Activated CD4-positive, alpha-beta memory T cell treated with anti-CD3 and anti-CD28 coated beads for 36 hours (primary cell): ENCODE measurements at regions of chr15 and their contacts with region 1.

Region 1: DNA sequence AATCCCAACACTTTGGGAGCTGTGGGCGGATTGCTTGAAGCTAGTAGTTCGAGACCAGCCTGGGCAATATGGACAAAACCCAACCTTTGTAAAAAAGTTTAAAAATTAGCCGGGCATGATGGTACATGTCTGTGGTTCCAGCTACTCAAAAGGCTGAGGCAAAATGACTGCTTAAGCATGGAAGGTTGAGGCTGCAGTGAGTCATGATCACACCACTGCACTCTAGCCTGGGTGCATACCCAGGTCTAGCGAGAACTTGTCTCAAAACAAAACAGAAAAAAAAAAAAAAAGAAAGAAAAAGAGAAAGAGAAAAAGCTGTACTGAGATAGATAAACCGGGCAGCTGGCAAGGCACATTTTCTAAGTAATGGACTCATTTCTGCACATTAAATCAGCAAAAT is 10.6 kb downstream of the ARPP19 start:
- DNase-seq: peak; percentile 84
- H3K4me3 Mint-ChIP-seq: peak overlapping the region; percentile 37
- H3K27ac Mint-ChIP-seq: peak overlapping the region; percentile 97
- H3K4me1 Mint-ChIP-seq: peaks cover 72% of the 10 kb centered on the region
- H3K27me3 Mint-ChIP-seq: no peaks in the 10 kb centered on the region

Region 2: GRCh38 chr15:52005748-52006701 is 552.2 kb before region 1 on chr15:
- CTCF ChIA-PET with region 1: no interaction called
- POLR2A ChIA-PET with region 1: interaction called, 5 read pairs
- intact Hi-C with region 1: loop called (anchors 5 kb)
- DNase-seq: peak; percentile 60
- H3K4me3 Mint-ChIP-seq: no peak overlapping the region
- H3K27ac Mint-ChIP-seq: peak overlapping the region; percentile 69
- H3K4me1 Mint-ChIP-seq: peaks cover 63% of the 10 kb centered on the region
- H3K27me3 Mint-ChIP-seq: no peaks in the 10 kb centered on the region

Region 3: DNA sequence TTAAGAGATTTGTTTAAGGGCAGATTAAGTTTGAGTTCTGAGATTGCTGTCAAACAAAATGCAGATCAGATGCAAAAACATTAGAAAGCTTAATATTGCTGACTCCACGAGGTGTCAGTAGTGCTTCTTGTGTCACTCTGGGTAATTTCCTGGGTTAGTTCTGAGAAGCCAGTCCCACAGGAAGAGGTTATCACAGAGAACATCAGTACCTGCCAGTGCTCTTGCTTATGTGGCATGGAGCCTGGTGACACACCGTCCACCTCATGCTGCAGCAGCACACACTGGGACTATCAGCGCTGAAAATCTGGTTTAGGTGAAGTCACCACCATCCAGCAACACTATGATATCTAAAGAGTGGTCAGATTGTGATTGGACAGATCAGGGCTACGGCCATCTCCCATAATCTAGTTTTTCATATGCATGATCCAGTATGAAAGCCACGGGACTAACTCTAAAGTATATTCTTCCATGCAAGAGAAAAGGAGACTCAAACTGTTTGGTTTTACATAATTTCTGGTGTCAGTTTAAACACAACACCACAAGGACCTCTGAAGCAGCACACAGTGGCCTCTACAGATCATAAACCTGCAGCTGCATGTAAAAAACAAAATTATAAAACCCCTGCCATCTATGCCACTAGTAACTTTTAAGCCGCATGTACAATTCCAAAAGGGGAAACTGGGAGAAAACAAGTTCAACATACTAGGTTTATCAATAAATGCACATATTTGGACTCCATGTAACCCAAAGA is 226.5 kb before region 1 on chr15:
- CTCF ChIA-PET with region 1: interaction called, 4 read pairs
- POLR2A ChIA-PET with region 1: interaction called, 3 read pairs
- intact Hi-C with region 1: loop called (anchors 1 kb)
- DNase-seq: peak; percentile 76
- H3K4me3 Mint-ChIP-seq: no peak overlapping the region
- H3K27ac Mint-ChIP-seq: peak overlapping the region; percentile 82
- H3K4me1 Mint-ChIP-seq: peaks cover 18% of the 10 kb centered on the region
- H3K27me3 Mint-ChIP-seq: no peaks in the 10 kb centered on the region

Region 4: DNA sequence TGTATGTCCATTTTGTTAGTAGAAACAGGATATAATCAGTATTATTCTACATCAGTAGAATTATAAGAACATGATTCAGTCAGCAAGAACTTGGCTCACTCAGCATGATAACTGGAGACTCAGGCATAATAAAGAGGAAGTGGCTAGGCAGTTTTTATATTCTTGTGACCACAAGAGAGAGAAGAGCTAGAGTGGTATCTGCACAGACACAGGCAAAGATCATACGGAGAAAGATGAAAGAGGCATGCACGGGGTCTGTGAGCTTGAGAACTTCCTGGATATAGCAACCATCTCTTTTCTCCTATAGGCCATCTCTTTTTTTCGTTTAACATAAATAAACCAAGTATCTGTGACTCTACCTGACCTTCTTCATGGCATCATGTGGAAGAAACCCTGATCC is 76.3 kb before region 1 on chr15:
- CTCF ChIA-PET with region 1: no interaction called
- POLR2A ChIA-PET with region 1: interaction called, 5 read pairs
- intact Hi-C with region 1: loop called (anchors 1 kb)
- DNase-seq: peak; percentile 60
- H3K4me3 Mint-ChIP-seq: no peak overlapping the region
- H3K27ac Mint-ChIP-seq: peak overlapping the region; percentile 53
- H3K4me1 Mint-ChIP-seq: peaks cover 67% of the 10 kb centered on the region
- H3K27me3 Mint-ChIP-seq: no peaks in the 10 kb centered on the region

Region 5: DNA sequence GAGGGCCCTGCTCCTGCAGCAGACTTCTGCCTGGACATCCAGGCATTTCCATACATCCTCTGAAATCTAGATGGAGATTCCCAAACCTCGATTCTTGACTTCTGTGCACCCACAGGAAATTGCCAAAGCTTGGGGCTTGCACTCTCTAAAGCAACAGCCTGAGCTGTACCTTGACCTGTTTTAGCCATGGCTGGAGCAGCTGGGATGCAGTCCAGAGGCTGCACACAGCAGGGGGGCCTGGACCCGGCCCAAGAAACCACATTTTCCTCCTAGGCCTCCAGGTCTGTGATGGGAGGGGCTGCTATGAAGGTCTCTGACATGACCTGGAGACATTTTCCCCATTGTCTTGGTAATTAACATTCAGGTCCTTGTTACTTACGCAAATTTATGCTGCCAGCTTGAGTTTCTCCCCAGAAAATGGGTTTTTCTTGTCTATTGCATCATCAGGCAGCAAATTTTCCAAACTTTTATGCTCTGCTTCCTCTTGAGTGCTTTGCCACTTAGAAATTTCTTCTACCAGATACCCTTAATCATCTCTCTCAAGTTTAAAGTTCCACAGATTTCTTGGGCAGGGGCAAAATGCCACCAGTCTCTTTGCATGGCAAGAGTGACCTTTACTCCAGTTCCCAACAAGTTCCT is 17.7 kb before region 1 on chr15:
- CTCF ChIA-PET with region 1: no interaction called
- POLR2A ChIA-PET with region 1: interaction called, 11 read pairs
- intact Hi-C with region 1: loop called (anchors 1 kb)
- DNase-seq: no peak
- H3K4me3 Mint-ChIP-seq: no peak overlapping the region
- H3K27ac Mint-ChIP-seq: no peak overlapping the region
- H3K4me1 Mint-ChIP-seq: peaks cover 4% of the 10 kb centered on the region
- H3K27me3 Mint-ChIP-seq: no peaks in the 10 kb centered on the region

Region 6: DNA sequence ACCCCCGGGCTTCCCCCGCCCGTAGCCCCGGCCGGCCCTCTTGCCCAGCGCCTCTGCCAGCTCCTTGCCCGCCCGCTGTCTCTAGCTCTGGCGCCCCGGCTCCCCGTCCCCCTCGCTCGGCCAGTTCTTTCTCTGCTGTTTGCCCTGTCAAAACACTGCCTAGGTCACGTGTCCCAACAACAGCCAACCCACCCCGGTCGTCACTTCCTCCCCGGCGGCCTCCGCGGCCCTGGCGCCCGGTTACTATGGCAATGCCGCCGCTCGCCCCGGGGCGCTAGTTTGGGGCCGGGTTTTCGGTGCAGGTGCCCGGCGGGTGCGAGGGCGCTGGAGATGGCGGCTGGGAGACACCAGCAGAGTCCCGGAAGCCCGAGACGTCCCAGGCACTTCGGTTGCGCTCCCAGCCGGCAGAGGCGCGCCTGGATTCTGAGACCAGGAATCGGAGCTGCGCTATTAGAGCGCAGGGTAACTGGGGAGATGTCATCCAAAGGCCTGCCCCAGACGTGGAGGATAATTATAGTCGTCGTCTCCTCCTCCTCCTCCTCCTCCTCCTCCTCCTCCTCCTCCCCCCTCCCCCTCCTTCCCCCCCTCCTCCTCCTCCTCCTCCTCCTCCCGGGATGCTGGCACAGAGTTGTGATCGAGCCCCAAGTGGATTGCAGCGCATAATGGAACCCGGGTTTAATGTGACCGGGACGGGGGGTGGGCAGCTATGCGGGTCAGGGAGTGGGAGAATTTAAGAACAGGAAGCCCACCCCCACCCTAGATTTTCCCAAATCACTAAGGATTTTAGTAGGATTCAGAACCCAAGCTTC is 121.2 kb after region 1 on chr15 and contains the start of gene ATOSA:
- CTCF ChIA-PET with region 1: interaction called, 4 read pairs
- POLR2A ChIA-PET with region 1: interaction called, 5 read pairs
- intact Hi-C with region 1: loop called (anchors 1 kb)
- DNase-seq: peak; percentile 95
- H3K4me3 Mint-ChIP-seq: peak within 1 kb of the TSS; percentile 100
- H3K27ac Mint-ChIP-seq: peak within 1 kb of the TSS; percentile 97
- H3K4me1 Mint-ChIP-seq: peaks cover 47% of the 10 kb centered on the region
- H3K27me3 Mint-ChIP-seq: no peaks in the 10 kb centered on the region
- total RNA-seq, gene ATOSA: 18.2 to 19.3 TPM